ENCODE measurements at regions of chr17 and their contacts with region 1.

Region 1: GRCh38 chr17:59161477-59161876 is 5.9 kb downstream of the PRR11 start:
- DNase-seq: no peak
- H3K27ac ChIP-seq: peak overlapping the region; percentile 45
- CTCF ChIP-seq: no peak

Region 2: GRCh38 chr17:59149841-59150511 is 11.5 kb before region 1 on chr17:
- CTCF ChIA-PET with region 1: interaction called, 3 read pairs
- POLR2A ChIA-PET with region 1: interaction called, 10 read pairs
- DNase-seq: no peak
- H3K27ac ChIP-seq: peak overlapping the region; percentile 58
- CTCF ChIP-seq: no peak